Activated CD4-positive, alpha-beta T cell treated with anti-CD3 and anti-CD28 coated beads for 36 hours (primary cell): ENCODE measurements at regions of chr14 and their contacts with region 1.

Region 1: GRCh38 chr14:51780006-51780692 is 80.3 kb upstream of the GNG2 start:
- DNase-seq: peak; percentile 83
- ATAC-seq: peak; percentile 56
- H3K4me3 Mint-ChIP-seq: no peak overlapping the region
- H3K27ac Mint-ChIP-seq: no peak overlapping the region
- H3K4me1 Mint-ChIP-seq: peaks cover 26% of the 10 kb centered on the region
- H3K27me3 Mint-ChIP-seq: peaks cover 4% of the 10 kb centered on the region

Region 2: GRCh38 chr14:51094901-51095853 is 685.0 kb before region 1 on chr14 and contains the start of gene TRIM9:
- CTCF ChIA-PET with region 1: no interaction called
- POLR2A ChIA-PET with region 1: no interaction called
- intact Hi-C with region 1: loop called in 1 of 2 experiments (anchors 2 kb)
- DNase-seq: peak; percentile 97
- ATAC-seq: peak; percentile 97
- H3K4me3 Mint-ChIP-seq: peak within 1 kb of the TSS; percentile 79
- H3K27ac Mint-ChIP-seq: peak within 1 kb of the TSS; percentile 79
- H3K4me1 Mint-ChIP-seq: peaks cover 15% of the 10 kb centered on the region
- H3K27me3 Mint-ChIP-seq: peaks cover 10% of the 10 kb centered on the region
- total RNA-seq, gene TRIM9: 2.4 TPM

Region 3: GRCh38 chr14:51283402-51284085 is 496.6 kb before region 1 on chr14:
- CTCF ChIA-PET with region 1: interaction called, 49 read pairs
- POLR2A ChIA-PET with region 1: interaction called, 3 read pairs
- intact Hi-C with region 1: loop called (anchors 1 to 2 kb)
- DNase-seq: no peak
- ATAC-seq: no peak
- H3K4me3 Mint-ChIP-seq: no peak overlapping the region
- H3K27ac Mint-ChIP-seq: no peak overlapping the region
- H3K4me1 Mint-ChIP-seq: no peaks in the 10 kb centered on the region
- H3K27me3 Mint-ChIP-seq: no peaks in the 10 kb centered on the region

Region 4: GRCh38 chr14:51554953-51555352 is 225.2 kb before region 1 on chr14:
- CTCF ChIA-PET with region 1: no interaction called
- POLR2A ChIA-PET with region 1: interaction called, 4 read pairs
- intact Hi-C with region 1: loop called in 1 of 2 experiments (anchors 1 kb)
- DNase-seq: no peak
- ATAC-seq: no peak
- H3K4me3 Mint-ChIP-seq: no peak overlapping the region
- H3K27ac Mint-ChIP-seq: no peak overlapping the region
- H3K4me1 Mint-ChIP-seq: no peaks in the 10 kb centered on the region
- H3K27me3 Mint-ChIP-seq: peaks cover 4% of the 10 kb centered on the region

Region 5: GRCh38 chr14:51860164-51860824 is 80.1 kb after region 1 on chr14 and contains the start of gene GNG2:
- CTCF ChIA-PET with region 1: interaction called, 4 read pairs
- POLR2A ChIA-PET with region 1: no interaction called
- intact Hi-C with region 1: loop called (anchors 5 kb)
- DNase-seq: peak; percentile 90
- ATAC-seq: peak; percentile 93
- H3K4me3 Mint-ChIP-seq: peak within 1 kb of the TSS; percentile 90
- H3K27ac Mint-ChIP-seq: peak within 1 kb of the TSS; percentile 82
- H3K4me1 Mint-ChIP-seq: peaks cover 50% of the 10 kb centered on the region
- H3K27me3 Mint-ChIP-seq: no peaks in the 10 kb centered on the region
- total RNA-seq, gene GNG2: 133 to 136 TPM

Region 6: DNA sequence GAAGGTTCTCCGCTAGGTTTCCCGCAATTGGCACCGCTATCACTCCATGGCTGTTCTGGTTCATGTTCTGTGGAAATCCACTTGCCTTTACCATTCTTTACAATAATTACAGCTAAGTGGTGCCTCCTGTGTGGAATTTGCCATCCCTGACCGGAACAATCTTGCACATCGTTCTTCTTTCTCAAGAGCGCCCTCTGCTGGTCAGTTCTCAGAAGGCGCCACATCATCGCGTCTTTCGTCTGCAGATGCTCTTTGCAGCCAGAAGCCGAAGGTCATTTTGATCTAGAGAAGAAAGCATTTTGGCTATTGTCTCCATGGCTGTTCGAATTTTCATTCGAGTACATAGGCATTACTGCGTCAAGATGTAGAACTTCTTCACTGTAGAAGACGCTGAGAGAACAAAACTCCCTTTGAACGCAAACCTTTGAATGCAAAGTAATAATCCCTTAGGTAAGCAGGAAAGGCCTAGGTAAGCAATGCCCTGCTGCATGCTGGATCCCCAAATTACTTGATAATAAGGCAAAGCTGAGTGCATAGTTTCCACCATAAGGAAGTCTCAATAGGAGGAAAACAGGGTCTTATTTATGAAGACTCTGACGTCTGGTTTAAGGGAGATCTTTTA is 199.1 kb after region 1 on chr14:
- CTCF ChIA-PET with region 1: interaction called, 11 read pairs
- POLR2A ChIA-PET with region 1: no interaction called
- intact Hi-C with region 1: loop called (anchors 1 to 2 kb)
- DNase-seq: peak; percentile 90
- ATAC-seq: peak; percentile 67
- H3K4me3 Mint-ChIP-seq: no peak overlapping the region
- H3K27ac Mint-ChIP-seq: no peak overlapping the region
- H3K4me1 Mint-ChIP-seq: peaks cover 9% of the 10 kb centered on the region
- H3K27me3 Mint-ChIP-seq: peaks cover 1% of the 10 kb centered on the region

Region 7: GRCh38 chr14:52043690-52044089 is 263.5 kb after region 1 on chr14:
- CTCF ChIA-PET with region 1: no interaction called
- POLR2A ChIA-PET with region 1: no interaction called
- intact Hi-C with region 1: no loop called
- DNase-seq: peak; percentile 58
- ATAC-seq: peak; percentile 56
- H3K4me3 Mint-ChIP-seq: no peak overlapping the region
- H3K27ac Mint-ChIP-seq: no peak overlapping the region
- H3K4me1 Mint-ChIP-seq: peaks cover 19% of the 10 kb centered on the region
- H3K27me3 Mint-ChIP-seq: peaks cover 5% of the 10 kb centered on the region